ENCODE measurements at regions of chr19 and their contacts with region 1.

Region 1: DNA sequence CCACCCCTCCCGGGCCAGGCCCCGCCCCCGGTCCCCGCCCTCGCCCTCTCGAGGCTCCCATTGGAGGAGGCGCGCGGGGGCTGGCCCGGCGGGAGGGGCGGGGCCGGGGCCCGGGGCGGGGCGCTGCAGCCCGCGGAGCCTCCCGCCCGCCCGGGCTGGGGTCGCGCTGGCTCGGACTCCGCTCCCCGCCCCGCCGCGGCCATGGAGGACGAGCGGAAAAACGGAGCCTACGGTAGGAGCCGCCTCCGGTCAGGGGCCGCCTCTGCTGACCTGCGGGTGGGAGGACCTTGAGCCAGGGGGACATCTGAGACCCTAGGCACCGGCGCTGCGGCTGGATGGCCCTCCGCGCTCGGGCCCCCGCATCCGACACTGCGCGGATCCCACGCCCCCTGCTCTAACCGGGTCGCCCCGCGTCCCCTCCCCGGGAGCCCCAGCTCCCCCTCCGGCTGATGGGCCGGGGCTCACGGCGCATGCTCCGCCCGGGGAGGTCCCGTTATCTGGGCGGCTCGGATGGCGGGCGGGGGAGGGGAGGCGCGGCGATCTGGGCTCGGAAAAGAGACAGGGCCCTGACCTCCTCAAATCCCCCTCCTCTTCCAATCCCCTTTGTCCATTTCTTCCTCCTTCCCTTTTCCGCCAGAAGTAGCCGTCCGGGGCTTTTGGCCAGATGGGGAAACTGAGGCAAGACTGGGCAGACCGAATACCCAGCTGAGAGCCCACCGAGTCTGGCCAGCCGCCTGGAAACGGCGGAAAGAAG is 15.4 kb upstream of the AP1M2 start:
- DNase-seq: peak; percentile 58 to 77
- H3K4me3 ChIP-seq: peak overlapping the region; percentile 93
- H3K27ac ChIP-seq: peak overlapping the region; percentile 90
- H3K4me1 ChIP-seq: peaks cover 31% of the 10 kb centered on the region
- H3K27me3 ChIP-seq: no peaks in the 10 kb centered on the region
- CTCF ChIP-seq: no peak

Region 2: GRCh38 chr19:10587022-10587789 is 15.3 kb before region 1 on chr19 and contains the start of gene AP1M2:
- CTCF ChIA-PET with region 1: interaction called, 5 read pairs
- POLR2A ChIA-PET with region 1: interaction called, 17 read pairs
- intact Hi-C with region 1: loop called (anchors 2 kb)
- DNase-seq: peak; percentile 60 to 77
- H3K4me3 ChIP-seq: peak within 1 kb of the TSS; percentile 86
- H3K27ac ChIP-seq: peak within 1 kb of the TSS; percentile 58
- H3K4me1 ChIP-seq: peaks cover 8% of the 10 kb centered on the region; the same call in 1 of the 2 replicates
- H3K27me3 ChIP-seq: no peaks in the 10 kb centered on the region
- CTCF ChIP-seq: no peak
- total RNA-seq, gene AP1M2: 94.5 and 126 TPM in 2 replicates

Region 3: GRCh38 chr19:10612491-10613119 is 10.1 kb after region 1 on chr19:
- CTCF ChIA-PET with region 1: interaction called, 5 read pairs
- POLR2A ChIA-PET with region 1: no interaction called
- intact Hi-C with region 1: loop called (anchors 1 kb)
- DNase-seq: peak in 1 of 2 experiments; percentile 64
- H3K4me3 ChIP-seq: no peak overlapping the region
- H3K27ac ChIP-seq: no peak overlapping the region
- H3K4me1 ChIP-seq: peaks cover 15% of the 10 kb centered on the region
- H3K27me3 ChIP-seq: no peaks in the 10 kb centered on the region
- CTCF ChIP-seq: no peak

Region 4: DNA sequence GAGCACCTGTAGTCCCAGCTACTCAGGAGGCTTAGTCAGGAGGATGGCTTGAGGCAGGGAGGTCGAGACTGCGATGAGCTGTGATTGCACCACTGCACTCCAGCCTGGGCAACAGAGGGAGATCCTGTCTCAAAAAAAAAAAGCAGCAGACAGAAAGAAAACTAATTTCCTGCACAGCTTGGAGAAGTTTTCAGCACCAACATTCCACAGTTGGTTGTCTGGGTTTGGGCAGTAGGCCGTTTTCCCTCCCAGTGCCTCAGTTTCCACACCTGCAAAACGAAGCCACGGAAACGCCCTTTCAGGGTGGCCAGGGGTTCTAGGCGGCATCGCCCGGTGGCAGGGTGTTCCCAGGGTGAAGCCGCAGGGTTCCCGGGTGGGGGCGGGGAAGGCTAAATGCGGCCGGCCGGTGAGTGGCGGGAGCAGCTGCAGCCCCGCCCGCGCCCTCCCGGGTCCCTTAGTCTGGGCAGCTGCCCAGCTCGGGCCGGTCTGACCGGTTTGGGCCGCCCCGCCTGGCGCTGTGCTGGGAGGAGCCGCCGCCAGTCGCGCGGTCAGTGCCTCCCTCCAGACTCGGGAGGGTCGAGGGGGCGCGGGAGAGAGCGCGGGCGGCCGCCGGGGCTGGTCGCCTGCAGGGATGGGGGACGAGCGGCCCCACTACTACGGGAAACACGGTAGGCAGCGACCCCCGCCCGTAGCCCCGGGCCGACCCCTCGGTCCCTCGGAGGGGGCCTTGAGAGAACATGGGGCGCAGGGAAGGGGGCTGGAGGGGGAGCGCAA is 22.7 kb after region 1 on chr19 and contains the start of gene SLC44A2:
- CTCF ChIA-PET with region 1: interaction called, 9 read pairs
- POLR2A ChIA-PET with region 1: interaction called, 4 read pairs
- intact Hi-C with region 1: loop called (anchors 2 kb)
- DNase-seq: peak; percentile 76 to 95
- H3K4me3 ChIP-seq: peak within 1 kb of the TSS; percentile 83
- H3K27ac ChIP-seq: peak within 1 kb of the TSS; percentile 56
- H3K4me1 ChIP-seq: peaks cover 67% of the 10 kb centered on the region
- H3K27me3 ChIP-seq: no peaks in the 10 kb centered on the region
- CTCF ChIP-seq: no peak
- total RNA-seq, gene SLC44A2: 205 and 239 TPM in 2 replicates

Region 5: GRCh38 chr19:10848230-10848856 is 245.8 kb after region 1 on chr19 and contains the start of gene C19orf38:
- CTCF ChIA-PET with region 1: no interaction called
- POLR2A ChIA-PET with region 1: no interaction called
- intact Hi-C with region 1: no loop called
- DNase-seq: peak in 1 of 2 experiments; percentile 21
- H3K4me3 ChIP-seq: no peak within 1 kb of the TSS
- H3K27ac ChIP-seq: no peak within 1 kb of the TSS
- H3K4me1 ChIP-seq: no peaks in the 10 kb centered on the region
- H3K27me3 ChIP-seq: no peaks in the 10 kb centered on the region
- CTCF ChIP-seq: no peak
- total RNA-seq, gene C19orf38: 0.59 and 1.4 TPM in 2 replicates